HepG2 (cell line): ENCODE measurements at regions of chrX and their contacts with region 1.

Region 1: GRCh38 chrX:74291964-74292807 is 11.8 kb upstream of the ZCCHC13 start:
- DNase-seq: peak; percentile 76
- ATAC-seq: peak; percentile 96
- H3K4me3 ChIP-seq: peak overlapping the region; percentile 71 to 81 (median 80)
- H3K27ac ChIP-seq: peak overlapping the region; percentile 97
- H3K4me1 ChIP-seq: peaks cover 19% of the 10 kb centered on the region
- H3K27me3 ChIP-seq: no peaks in the 10 kb centered on the region; a peak in 1 of 5 replicates
- CTCF ChIP-seq: peak; percentile 63
- EP300 ChIP-seq: no peak
- POLR2A ChIP-seq: peak; percentile 51 to 63
- RAD21 ChIP-seq: no peak

Region 2: DNA sequence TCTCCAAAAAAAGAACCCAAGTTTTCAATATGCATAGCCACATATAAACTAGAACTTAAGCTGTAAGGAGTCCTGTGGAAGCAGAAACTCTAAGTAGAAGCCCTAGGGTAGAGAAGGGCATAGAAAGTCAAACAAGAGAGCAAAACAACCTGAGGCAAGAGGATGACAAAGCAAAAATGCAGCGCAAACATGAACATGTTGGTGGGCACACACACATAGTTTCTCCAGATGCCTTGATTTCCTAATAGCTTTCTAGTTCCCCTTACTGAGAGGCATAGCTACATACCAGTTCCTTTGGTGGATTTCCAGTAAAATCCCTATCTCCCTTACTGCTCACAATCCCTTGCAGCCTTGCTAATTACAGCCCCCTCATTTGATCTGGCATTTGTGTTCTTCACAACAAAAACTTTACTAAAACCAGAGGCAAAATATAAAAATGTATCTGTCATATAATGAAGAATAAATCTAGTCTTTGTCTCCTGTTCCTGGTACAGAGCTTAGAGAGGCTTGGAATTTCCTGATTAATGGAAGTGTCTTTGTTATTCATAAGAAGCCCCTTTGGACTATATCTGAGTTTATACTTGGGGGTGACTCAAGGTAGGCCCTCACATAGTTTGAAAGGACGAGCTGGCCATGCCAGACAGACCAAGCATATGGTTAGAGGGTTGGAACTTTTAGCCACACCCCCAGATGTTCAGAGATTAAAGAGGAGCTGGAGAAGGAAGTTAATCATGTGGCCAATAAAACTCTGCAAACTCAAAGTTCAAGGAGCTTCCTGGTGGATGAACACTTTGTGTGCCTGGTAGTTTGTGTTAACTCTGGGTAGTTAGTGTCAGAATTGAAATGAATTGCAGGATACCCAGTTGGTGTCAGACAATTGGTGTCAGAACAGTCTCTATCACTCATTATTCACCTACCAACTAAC is 40.9 kb before region 1 on chrX:
- CTCF ChIA-PET with region 1: no interaction called
- POLR2A ChIA-PET with region 1: interaction called, 20 read pairs
- in situ Hi-C with region 1: no loop called
- intact Hi-C with region 1: loop called (anchors 10 kb)
- DNase-seq: peak; percentile 80
- ATAC-seq: peak; percentile 79
- H3K4me3 ChIP-seq: no peak overlapping the region
- H3K27ac ChIP-seq: peak overlapping the region; percentile 83
- H3K4me1 ChIP-seq: peaks cover 40% of the 10 kb centered on the region
- H3K27me3 ChIP-seq: no peaks in the 10 kb centered on the region
- CTCF ChIP-seq: no peak
- EP300 ChIP-seq: peak in 1 of 2 experiments; percentile 58; a peak in 1 of 4 replicates
- POLR2A ChIP-seq: no peak
- RAD21 ChIP-seq: no peak

Region 3: GRCh38 chrX:74421036-74421739 is 129.0 kb after region 1 on chrX and contains the start of gene SLC16A2:
- CTCF ChIA-PET with region 1: no interaction called
- POLR2A ChIA-PET with region 1: no interaction called
- in situ Hi-C with region 1: no loop called
- intact Hi-C with region 1: loop called (anchors 2 kb)
- DNase-seq: no peak
- ATAC-seq: peak; percentile 62
- H3K4me3 ChIP-seq: peak within 1 kb of the TSS; percentile 35 to 67 (median 41); a peak in 4 of 6 replicates
- H3K27ac ChIP-seq: no peak within 1 kb of the TSS
- H3K4me1 ChIP-seq: peaks cover 11% of the 10 kb centered on the region; the same call in 1 of the 2 replicates
- H3K27me3 ChIP-seq: peaks cover 0 to 11% of the 10 kb centered on the region in 2 experiments; a peak in 1 of 5 replicates
- CTCF ChIP-seq: no peak
- EP300 ChIP-seq: no peak
- POLR2A ChIP-seq: no peak
- RAD21 ChIP-seq: no peak
- total RNA-seq, gene SLC16A2: 0.07 TPM in 1 of 2 replicates, not detected in the other